H1 (cell line): ENCODE measurements at regions of chr1 and their contacts with region 1.

Region 1: DNA sequence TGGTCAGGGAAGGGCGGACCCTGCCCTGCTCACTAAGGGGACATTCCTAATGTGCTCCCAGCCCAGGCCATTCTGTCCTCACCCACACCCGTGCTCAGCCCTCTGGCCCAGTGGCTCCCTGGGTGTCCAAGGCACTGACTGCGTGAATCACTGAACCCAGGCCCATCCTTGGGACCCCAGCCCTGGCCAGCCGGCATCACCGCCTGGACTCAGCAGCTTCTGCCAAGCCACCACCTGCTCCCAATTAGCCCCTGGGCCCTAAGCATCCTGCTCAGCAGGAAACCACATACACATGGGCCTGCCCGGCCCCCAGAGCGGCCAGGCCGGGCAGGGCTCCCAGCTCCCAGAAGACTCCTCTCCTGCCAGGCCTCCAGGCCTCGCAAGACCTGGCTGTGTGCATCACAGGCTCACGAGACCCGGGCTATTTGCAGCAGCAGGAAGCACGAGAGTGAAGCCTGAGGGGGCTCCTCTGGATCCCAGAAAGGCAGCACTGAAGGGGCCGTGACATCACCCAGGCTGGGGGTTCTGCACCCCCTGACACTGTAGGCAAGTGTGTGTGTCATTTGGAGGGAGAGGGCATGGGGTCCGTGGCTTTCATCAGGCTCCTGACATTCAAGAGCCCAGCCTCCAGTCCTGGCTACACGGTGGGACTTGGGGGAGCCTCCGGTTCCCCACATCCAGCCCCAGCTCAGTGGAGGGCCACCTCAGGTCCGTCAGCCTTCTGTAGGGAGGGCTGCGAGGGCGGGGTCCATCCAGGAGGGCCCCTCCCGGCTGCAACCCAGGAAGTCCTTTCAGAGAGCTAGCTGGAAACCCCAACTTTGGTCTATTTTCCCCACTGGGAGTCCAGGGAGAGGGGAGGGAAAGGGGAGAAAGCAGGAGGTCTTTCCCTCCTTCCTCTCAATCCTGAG is 1.6 kb downstream of the MFAP2 start:
- DNase-seq: peak in 1 of 2 experiments; percentile 49
- H3K4me3 ChIP-seq: peak overlapping the region; percentile 62 to 98 (median 86); a peak in 7 of 8 replicates
- H3K27ac ChIP-seq: no peak overlapping the region
- H3K4me1 ChIP-seq: peaks cover 0 to 20% (median 14%) of the 10 kb centered on the region in 4 experiments; a peak in 6 of 7 replicates
- H3K27me3 ChIP-seq: peaks cover 0 to 3% (median 0%) of the 10 kb centered on the region in 4 experiments; a peak in 1 of 7 replicates
- CTCF ChIP-seq: no peak
- EP300 ChIP-seq: no peak
- POLR2A ChIP-seq: 0 out of 3 replicates have a peak, but pooled peaks of 1 of the 2 experiments have one; percentile 26
- RAD21 ChIP-seq: no peak

Region 2: DNA sequence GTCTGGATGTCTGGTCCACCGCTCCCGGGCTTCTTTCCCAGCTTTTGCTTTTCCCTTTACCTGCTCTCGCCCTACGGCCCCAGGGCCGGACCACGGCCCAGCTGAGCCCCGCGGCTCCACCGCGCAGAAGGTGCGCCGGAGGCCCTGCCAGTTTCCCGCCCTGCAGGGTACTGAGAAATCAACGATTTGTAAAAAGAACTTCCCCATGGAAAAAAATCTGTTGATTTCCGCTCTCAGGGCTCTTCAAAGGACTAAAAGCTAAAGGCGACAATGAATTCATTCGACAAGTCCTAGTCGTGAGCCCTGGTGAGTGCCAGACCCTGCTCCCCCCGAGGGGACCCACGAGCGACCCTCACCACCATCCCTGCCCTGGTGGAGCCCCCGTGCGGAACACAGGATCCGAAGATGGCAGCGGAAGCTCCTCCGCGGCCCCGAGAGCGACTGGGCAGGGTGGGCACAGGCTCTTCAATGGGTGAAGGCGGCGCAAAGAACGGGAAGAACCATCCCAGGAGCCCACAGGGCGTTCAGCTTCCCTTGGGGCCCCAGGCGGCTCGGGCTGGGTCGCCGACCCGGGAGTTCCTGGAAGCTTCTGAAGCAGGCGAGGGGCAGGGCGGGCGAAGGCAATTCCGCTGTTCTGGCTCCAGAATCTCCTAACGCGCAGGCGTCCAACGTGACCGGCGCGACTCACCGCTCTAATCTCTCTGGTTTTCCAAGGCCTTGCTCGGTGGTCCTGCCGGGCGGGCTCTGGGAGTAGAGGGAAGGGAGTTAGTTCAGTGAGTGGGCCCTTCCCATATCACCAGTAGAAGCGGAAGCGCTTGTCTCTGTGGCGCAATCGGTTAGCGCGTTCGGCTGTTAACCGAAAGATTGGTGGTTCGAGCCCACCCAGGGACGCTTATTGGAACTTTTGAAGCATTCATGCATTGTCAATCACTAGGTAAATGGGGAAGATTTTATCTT is 89.7 kb before region 1 on chr1:
- CTCF ChIA-PET with region 1: no interaction called
- POLR2A ChIA-PET with region 1: no interaction called
- DNase-seq: peak; percentile 81 to 92
- H3K4me3 ChIP-seq: peak overlapping the region; percentile 73 to 85 (median 77)
- H3K27ac ChIP-seq: peak overlapping the region; percentile 44; the same call in 1 of the 2 replicates
- H3K4me1 ChIP-seq: no peaks in the 10 kb centered on the region
- H3K27me3 ChIP-seq: no peaks in the 10 kb centered on the region
- CTCF ChIP-seq: no peak
- EP300 ChIP-seq: no peak
- POLR2A ChIP-seq: peak in 1 of 2 experiments; percentile 30; a peak in 1 of 3 replicates
- RAD21 ChIP-seq: no peak

Region 3: GRCh38 chr1:16904560-16905111 is 74.2 kb before region 1 on chr1:
- CTCF ChIA-PET with region 1: no interaction called
- POLR2A ChIA-PET with region 1: interaction called, 13 read pairs
- DNase-seq: peak; percentile 85 to 94
- H3K4me3 ChIP-seq: peak overlapping the region; percentile 43 to 65 (median 48)
- H3K27ac ChIP-seq: peak overlapping the region; percentile 100
- H3K4me1 ChIP-seq: peaks cover 0 to 3% (median 0%) of the 10 kb centered on the region in 4 experiments; a peak in 3 of 7 replicates
- H3K27me3 ChIP-seq: no peaks in the 10 kb centered on the region
- CTCF ChIP-seq: no peak
- EP300 ChIP-seq: no peak
- POLR2A ChIP-seq: no peak
- RAD21 ChIP-seq: no peak

Region 4: GRCh38 chr1:16989676-16990391 is 11.0 kb after region 1 on chr1:
- CTCF ChIA-PET with region 1: interaction called, 23 read pairs
- POLR2A ChIA-PET with region 1: interaction called, 16 read pairs
- DNase-seq: no peak
- H3K4me3 ChIP-seq: no peak overlapping the region
- H3K27ac ChIP-seq: no peak overlapping the region
- H3K4me1 ChIP-seq: peaks cover 0 to 3% (median 0%) of the 10 kb centered on the region in 4 experiments; a peak in 2 of 7 replicates
- H3K27me3 ChIP-seq: no peaks in the 10 kb centered on the region
- CTCF ChIP-seq: no peak
- EP300 ChIP-seq: no peak
- POLR2A ChIP-seq: no peak
- RAD21 ChIP-seq: no peak

Region 5: GRCh38 chr1:17011439-17012307 is 32.9 kb after region 1 on chr1 and contains the start of gene ATP13A2:
- CTCF ChIA-PET with region 1: interaction called, 164 read pairs
- POLR2A ChIA-PET with region 1: interaction called, 18 read pairs
- DNase-seq: peak; percentile 77 to 86
- H3K4me3 ChIP-seq: peak within 1 kb of the TSS; percentile 58 to 94 (median 78)
- H3K27ac ChIP-seq: peak within 1 kb of the TSS; percentile 30; the same call in 1 of the 2 replicates
- H3K4me1 ChIP-seq: peaks cover 24 to 47% (median 34%) of the 10 kb centered on the region in 4 experiments
- H3K27me3 ChIP-seq: no peaks in the 10 kb centered on the region
- CTCF ChIP-seq: no peak
- EP300 ChIP-seq: no peak
- POLR2A ChIP-seq: peak in 1 of 2 experiments; percentile 34; a peak in 1 of 3 replicates
- RAD21 ChIP-seq: no peak
- total RNA-seq, gene ATP13A2: 82.1 and 89.8 TPM in 2 replicates

Region 6: DNA sequence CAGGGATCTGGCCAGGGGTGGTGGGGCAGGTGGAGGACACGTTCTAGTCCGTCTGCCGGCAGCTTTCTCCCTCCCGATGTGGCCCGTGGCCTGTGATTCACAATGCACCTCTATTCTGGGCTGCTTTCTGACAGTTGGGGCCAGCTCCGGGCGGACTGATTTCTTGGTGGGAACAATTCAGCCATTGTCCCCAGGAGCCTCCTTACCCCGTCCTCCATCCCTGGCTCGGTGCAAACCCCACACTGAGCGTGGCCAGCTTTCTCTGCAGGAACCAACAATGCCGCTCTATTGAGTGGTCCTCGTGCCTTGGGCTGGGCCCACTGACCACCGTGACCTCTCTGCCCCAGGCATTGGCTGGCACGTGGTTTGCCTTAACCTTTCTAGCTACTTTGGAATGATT is 110.7 kb after region 1 on chr1:
- CTCF ChIA-PET with region 1: no interaction called
- POLR2A ChIA-PET with region 1: no interaction called
- DNase-seq: no peak
- H3K4me3 ChIP-seq: no peak overlapping the region
- H3K27ac ChIP-seq: no peak overlapping the region
- H3K4me1 ChIP-seq: no peaks in the 10 kb centered on the region
- H3K27me3 ChIP-seq: no peaks in the 10 kb centered on the region
- CTCF ChIP-seq: no peak
- EP300 ChIP-seq: no peak
- POLR2A ChIP-seq: no peak
- RAD21 ChIP-seq: no peak